PC-9 (cell line): ENCODE measurements at regions of chr18 and their contacts with region 1.

Region 1: DNA sequence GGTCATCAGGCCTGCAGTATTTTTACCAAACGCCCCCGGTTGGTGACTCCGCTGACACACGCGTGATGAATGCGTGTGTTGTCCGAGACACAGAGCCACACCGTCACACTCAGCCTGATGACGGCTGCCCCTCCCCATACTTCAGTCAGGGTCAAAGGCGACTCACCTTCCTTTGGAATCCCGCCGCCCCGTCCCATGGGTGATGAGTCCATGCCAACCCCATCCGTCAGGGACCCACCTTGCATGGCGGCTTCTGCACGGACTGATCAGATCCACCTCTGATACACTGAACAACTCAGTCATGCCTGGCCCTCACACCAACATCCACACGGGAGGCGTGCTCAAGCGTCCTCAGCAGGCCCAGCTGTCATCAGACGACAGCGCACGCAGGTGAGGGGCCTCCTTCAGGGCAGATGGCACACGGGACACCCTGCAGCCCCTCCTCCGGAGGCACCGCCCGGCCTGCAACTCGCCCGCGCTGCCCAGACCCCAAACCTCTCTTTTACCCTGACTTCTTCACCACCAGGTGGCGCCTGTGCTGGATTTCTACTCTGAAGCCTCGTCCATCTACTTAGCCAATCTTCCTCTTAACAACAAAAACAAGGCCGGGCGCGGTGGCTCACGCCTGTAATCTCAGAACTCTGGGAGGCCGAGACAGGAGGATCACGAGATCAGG is 89.2 kb downstream of the ZNF516 start:
- DNase-seq: peak in 1 of 2 experiments; percentile 21
- H3K4me3 ChIP-seq: no peak overlapping the region
- H3K27ac ChIP-seq: no peak overlapping the region
- H3K4me1 ChIP-seq: no peaks in the 10 kb centered on the region
- H3K27me3 ChIP-seq: no peaks in the 10 kb centered on the region
- CTCF ChIP-seq: peak; percentile 83

Region 2: DNA sequence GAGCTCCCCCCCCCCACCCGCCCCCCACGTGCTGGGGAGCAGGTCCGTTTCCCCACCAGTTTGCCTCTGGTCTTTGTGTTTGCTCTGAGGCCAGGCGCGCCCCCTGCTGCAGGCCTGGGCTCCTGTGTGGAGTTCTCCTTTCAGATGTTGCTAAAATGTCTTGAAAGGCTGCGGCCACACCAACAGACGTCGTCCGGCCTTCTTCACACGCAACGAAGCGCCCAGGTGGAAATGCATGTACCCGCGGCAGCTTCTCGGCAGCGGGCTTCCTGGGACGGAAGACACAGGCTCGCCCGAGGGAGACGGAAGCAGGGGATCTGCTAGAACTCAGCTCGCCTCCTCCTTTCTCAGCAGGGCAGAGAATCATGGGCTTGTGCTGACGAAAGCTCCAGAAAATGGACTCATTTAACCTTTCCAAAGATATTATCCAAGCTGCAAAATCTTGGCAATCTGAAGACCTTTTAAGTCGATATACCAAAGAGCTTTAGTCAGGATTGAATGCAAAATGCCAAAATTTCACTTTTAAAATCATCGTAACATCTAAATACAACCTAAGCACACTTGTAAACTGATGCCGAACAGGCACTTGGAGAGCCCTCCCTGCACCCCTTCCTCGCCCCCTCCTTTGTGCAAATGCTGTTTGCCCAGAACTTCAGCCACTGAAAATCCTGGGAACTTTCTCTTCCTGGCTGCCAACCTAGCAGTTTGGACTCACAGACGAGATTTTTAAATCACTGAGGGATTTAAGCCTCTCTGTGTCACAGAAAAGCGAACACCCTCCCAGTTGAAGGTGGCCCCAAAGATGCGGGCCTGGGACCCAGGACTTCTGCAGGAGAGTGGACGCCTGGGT is 214.7 kb after region 1 on chr18:
- CTCF ChIA-PET with region 1: no interaction called
- POLR2A ChIA-PET with region 1: no interaction called
- intact Hi-C with region 1: loop called (anchors 2 kb)
- DNase-seq: peak in 1 of 2 experiments; percentile 45
- H3K4me3 ChIP-seq: no peak overlapping the region
- H3K27ac ChIP-seq: no peak overlapping the region
- H3K4me1 ChIP-seq: no peaks in the 10 kb centered on the region
- H3K27me3 ChIP-seq: no peaks in the 10 kb centered on the region
- CTCF ChIP-seq: no peak; the same call in 1 of the 2 replicates